ENCODE measurements at regions of chr21 and their contacts with region 1.

Region 1: GRCh38 chr21:36504067-36505058 is 24.4 kb upstream of the CLDN14 start:
- DNase-seq: peak in 4 of 5 donors; percentile 19 to 42 (median 28)
- H3K4me3 ChIP-seq: no peak overlapping the region
- H3K4me3 Mint-ChIP-seq: no peak overlapping the region
- H3K27ac ChIP-seq: no peak overlapping the region
- H3K27ac Mint-ChIP-seq: no peak overlapping the region
- H3K4me1 ChIP-seq: no peaks in the 10 kb centered on the region
- H3K4me1 Mint-ChIP-seq: no peaks in the 10 kb centered on the region
- H3K27me3 ChIP-seq: peaks cover 10% of the 10 kb centered on the region
- H3K27me3 Mint-ChIP-seq: peaks cover 11 to 14% of the 10 kb centered on the region in 2 donors

Region 2: DNA sequence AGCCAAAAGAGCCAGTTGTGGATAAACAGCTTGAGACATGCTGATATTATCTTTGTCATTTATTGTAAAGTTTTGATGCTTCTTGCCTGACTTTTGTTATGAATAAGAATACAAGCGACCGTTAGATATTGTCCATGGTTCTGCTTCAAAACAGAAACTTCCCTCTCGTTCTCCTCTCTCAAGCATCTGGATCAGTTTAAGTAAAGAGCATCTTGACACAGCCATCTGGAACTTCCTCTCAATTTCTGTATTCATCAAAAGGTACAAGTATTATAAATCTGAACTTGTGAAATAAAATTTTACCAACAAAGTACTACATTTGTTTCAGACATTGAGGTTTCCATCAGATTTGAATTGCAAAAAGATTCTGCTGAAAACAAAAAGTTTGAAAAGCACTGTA is 11.9 kb after region 1 on chr21:
- CTCF ChIA-PET with region 1: interaction called, 11 read pairs
- POLR2A ChIA-PET with region 1: no interaction called
- intact Hi-C with region 1: no loop called
- DNase-seq: no peak
- H3K4me3 ChIP-seq: no peak overlapping the region
- H3K4me3 Mint-ChIP-seq: no peak overlapping the region
- H3K27ac ChIP-seq: no peak overlapping the region
- H3K27ac Mint-ChIP-seq: no peak overlapping the region
- H3K4me1 ChIP-seq: no peaks in the 10 kb centered on the region
- H3K4me1 Mint-ChIP-seq: peaks cover 0 to 6% (median 2%) of the 10 kb centered on the region in 4 donors
- H3K27me3 ChIP-seq: no peaks in the 10 kb centered on the region
- H3K27me3 Mint-ChIP-seq: peaks cover 3 to 16% of the 10 kb centered on the region in 2 donors

Region 3: GRCh38 chr21:36927719-36928117 is 423.4 kb after region 1 on chr21:
- CTCF ChIA-PET with region 1: interaction called, 12 read pairs
- POLR2A ChIA-PET with region 1: no interaction called
- intact Hi-C with region 1: loop called (anchors 1 kb)
- DNase-seq: peak; percentile 36 to 48 (median 43)
- H3K4me3 ChIP-seq: no peak overlapping the region
- H3K4me3 Mint-ChIP-seq: no peak overlapping the region
- H3K27ac ChIP-seq: no peak overlapping the region
- H3K27ac Mint-ChIP-seq: no peak overlapping the region
- H3K4me1 ChIP-seq: no peaks in the 10 kb centered on the region
- H3K4me1 Mint-ChIP-seq: peaks cover 0 to 11% (median 3%) of the 10 kb centered on the region in 4 donors
- H3K27me3 ChIP-seq: no peaks in the 10 kb centered on the region
- H3K27me3 Mint-ChIP-seq: no peaks in the 10 kb centered on the region

Region 4: DNA sequence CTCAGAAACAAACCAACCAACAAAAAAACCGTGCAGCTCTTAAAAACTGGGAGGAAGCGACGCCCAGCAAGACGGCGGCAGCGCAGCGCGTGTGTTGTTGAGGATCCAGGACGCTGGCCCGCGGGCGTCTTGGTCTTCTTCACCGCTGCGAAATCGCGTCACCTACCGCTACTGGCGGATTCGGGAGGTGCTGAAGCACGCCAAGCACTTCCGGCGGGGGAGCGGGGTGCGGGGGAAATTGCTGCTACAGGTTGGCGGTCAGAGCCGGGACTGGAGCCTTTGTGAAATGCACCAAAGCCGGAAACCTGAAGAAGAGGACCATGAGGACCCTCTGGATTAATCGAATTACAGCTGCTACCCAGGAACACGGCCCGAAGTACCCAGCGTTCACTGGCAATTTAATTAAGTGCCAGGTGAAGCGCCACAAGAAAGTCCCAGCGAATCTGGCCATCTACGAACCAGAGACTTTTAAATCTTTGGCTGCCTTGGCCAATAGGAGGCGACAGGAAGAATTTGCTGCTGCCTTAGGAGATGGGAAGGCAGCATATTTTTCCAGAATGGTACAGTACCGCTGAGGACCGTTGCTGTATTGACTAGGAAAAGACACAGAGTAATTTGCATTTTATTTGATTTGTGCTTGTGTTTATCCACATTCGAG is 490.3 kb after region 1 on chr21:
- CTCF ChIA-PET with region 1: no interaction called
- POLR2A ChIA-PET with region 1: no interaction called
- intact Hi-C with region 1: no loop called
- DNase-seq: peak in 2 of 5 donors; percentile 33 to 35
- H3K4me3 ChIP-seq: no peak overlapping the region
- H3K4me3 Mint-ChIP-seq: peak overlapping the region in 6 of 8 donors; percentile 23 to 82 (median 44)
- H3K27ac ChIP-seq: no peak overlapping the region
- H3K27ac Mint-ChIP-seq: peak overlapping the region in 2 of 7 donors; percentile 59 to 86
- H3K4me1 ChIP-seq: peaks cover 5% of the 10 kb centered on the region
- H3K4me1 Mint-ChIP-seq: peaks cover 4 to 14% (median 10%) of the 10 kb centered on the region in 4 donors
- H3K27me3 ChIP-seq: no peaks in the 10 kb centered on the region
- H3K27me3 Mint-ChIP-seq: no peaks in the 10 kb centered on the region

Measured in CD4-positive, alpha-beta memory T cell (primary cell).